Cardiac septum (tissue), 1 donor: ENCODE measurements at regions of chr17 and their contacts with region 1.

Region 1: DNA sequence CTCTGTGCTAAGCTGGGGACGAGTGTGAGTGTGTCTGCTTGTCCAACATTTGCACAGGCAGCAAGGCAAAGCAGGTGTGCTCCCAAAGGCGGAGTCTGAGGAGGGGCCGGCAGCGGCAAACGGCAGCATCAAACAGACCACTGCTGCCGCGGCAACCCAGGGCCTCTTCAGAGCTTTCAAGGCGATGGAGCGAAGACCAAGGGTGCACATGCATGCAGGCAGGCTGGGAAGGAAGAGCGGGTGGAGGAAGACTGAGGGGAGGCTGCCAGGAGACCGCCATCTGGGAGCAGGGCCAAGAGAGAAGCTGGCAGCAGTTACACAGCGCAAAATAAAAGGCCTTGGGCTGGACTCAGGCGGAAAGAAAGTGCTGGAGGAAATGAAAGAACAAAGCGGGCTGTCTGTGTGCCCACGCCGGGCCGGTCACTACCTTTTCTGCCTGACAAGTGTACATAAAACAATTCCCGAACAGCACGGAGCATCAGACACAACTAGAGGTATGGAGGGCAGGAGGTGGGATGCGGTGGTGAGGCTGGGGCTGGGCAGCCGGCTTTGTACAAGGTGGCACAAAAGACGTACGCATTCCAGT is 8.5 kb downstream of the TIMM22 start:
- DNase-seq: no peak

Region 2: GRCh38 chr17:1019451-1019850 is 14.0 kb after region 1 on chr17:
- intact Hi-C with region 1: loop called (anchors 2 kb)
- DNase-seq: no peak

Region 3: DNA sequence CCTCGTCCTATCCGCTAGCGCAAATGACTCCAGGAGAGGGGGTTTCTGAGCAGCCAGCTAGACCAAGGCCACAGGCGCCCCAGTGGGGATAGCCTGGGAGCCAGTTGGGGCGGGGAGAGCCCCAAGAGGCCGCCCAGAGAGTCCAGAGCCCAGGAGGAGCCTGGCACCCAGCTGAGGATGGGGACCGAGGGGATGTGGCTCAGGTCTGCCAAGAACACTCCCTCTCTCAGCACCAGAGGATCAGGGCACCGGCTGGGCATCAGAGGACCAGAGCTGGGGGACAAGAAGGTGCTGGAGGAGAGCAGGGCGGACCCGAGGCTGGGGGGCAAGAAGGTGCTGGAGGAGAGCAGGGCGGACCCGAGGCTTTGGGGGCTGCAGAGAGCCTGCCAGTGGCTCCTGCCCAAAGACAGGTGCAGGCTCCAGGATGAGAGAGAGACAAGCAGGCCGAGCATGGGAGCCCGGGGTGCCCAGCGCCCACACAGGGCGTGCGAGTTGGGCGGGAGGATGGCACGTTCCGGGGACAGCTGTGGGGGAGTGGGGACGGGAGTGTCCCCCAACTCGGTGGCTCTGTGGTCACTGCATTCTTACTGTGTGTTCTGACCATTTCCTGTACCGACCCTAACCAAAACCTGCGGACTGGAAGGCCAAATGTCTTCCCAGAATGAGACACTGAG is 30.9 kb after region 1 on chr17:
- intact Hi-C with region 1: no loop called
- DNase-seq: no peak

Region 4: GRCh38 chr17:1047177-1047878 is 41.9 kb after region 1 on chr17:
- intact Hi-C with region 1: loop called (anchors 2 kb)
- DNase-seq: no peak

Region 5: GRCh38 chr17:1532836-1533602 is 527.6 kb after region 1 on chr17:
- intact Hi-C with region 1: no loop called
- DNase-seq: no peak